GM12878 (cell line): ENCODE measurements at regions of chr9 and their contacts with region 1.

Region 1: GRCh38 chr9:19281801-19282200 is 51.3 kb downstream of the DENND4C start:
- DNase-seq: no peak
- ATAC-seq: no peak
- H3K4me3 ChIP-seq: no peak overlapping the region
- H3K27ac ChIP-seq: no peak overlapping the region
- H3K4me1 ChIP-seq: no peaks in the 10 kb centered on the region
- H3K27me3 ChIP-seq: no peaks in the 10 kb centered on the region
- CTCF ChIP-seq: no peak
- EP300 ChIP-seq: no peak
- POLR2A ChIP-seq: no peak
- RAD21 ChIP-seq: no peak

Region 2: DNA sequence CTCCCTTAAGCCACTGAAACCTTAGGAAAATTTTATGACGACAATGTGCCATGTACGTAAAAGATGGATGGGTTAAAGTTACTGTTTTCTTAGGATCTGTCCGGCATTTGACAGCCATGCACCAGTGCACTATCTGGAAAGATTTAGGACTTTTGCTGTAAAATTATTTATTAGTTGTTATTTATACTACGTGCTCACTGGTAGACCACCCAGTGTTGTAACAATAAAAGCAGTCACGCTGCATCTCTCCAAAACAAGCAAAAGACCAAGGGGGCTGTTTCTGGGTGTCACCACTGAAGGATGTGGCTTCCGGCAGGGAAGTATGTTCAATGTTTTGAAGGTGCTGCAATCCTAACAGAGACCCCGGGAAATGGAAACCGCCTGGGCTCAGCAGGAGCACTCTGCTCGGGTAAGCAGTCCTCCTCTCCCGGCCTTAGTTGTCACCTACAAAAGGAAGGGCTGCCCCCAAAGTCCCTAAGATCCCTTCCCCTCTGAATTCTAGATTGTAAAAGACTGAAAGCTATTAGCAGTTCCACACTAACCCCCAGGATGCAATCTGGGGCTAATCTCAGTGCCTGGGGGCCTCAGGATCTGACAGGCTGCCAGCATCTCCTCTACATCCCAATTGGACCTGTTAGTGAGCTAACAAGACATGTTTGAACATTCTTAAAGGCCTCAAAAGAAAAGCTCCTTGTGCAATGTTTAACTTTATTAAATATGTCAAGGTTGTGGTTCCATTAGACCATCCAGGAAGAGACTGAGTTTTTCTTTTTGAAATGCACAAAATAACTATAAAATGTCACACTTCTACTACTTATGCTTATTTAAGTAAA is 287.3 kb before region 1 on chr9:
- CTCF ChIA-PET with region 1: no interaction called
- POLR2A ChIA-PET with region 1: no interaction called
- RAD21 ChIA-PET with region 1: no interaction called
- SMC1A ChIA-PET with region 1: no interaction called
- in situ Hi-C with region 1: no loop called
- intact Hi-C with region 1: no loop called
- DNase-seq: no peak
- ATAC-seq: no peak
- H3K4me3 ChIP-seq: no peak overlapping the region
- H3K27ac ChIP-seq: no peak overlapping the region
- H3K4me1 ChIP-seq: no peaks in the 10 kb centered on the region
- H3K27me3 ChIP-seq: peaks cover 0 to 2% of the 10 kb centered on the region in 2 experiments; a peak in 1 of 4 replicates
- CTCF ChIP-seq: no peak
- EP300 ChIP-seq: no peak
- POLR2A ChIP-seq: no peak
- RAD21 ChIP-seq: no peak

Region 3: DNA sequence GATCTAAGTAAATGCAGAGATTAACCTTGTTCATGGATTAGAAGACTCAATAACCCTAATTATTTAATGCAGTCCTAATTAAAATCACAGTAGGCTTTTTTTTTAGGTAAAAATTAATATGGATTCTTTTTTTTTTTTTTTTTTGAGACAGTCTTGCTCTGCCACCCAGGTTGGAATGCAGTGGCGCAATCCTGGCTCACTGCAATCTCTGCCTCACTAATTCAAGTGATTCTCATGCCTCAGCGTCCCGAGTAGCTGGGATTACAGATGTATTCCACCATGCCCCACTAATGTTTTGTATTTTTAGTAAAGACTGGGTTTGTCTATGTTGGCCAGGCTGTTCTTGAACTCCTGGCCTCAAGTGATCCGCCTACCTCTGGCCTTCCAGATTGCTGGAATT is 10.7 kb before region 1 on chr9:
- CTCF ChIA-PET with region 1: interaction called, 3 read pairs
- POLR2A ChIA-PET with region 1: interaction called, 10 read pairs
- RAD21 ChIA-PET with region 1: interaction called, 3 read pairs
- SMC1A ChIA-PET with region 1: interaction called, 3 read pairs
- in situ Hi-C with region 1: no loop called
- intact Hi-C with region 1: no loop called
- DNase-seq: no peak
- ATAC-seq: no peak
- H3K4me3 ChIP-seq: no peak overlapping the region
- H3K27ac ChIP-seq: no peak overlapping the region
- H3K4me1 ChIP-seq: no peaks in the 10 kb centered on the region; the same call in 1 of the 2 replicates
- H3K27me3 ChIP-seq: no peaks in the 10 kb centered on the region
- CTCF ChIP-seq: no peak
- EP300 ChIP-seq: no peak
- POLR2A ChIP-seq: no peak
- RAD21 ChIP-seq: no peak